ENCODE measurements at regions of chr6 and their contacts with region 1.

Region 1: GRCh38 chr6:33271458-33272274 is at the starts of genes RPS18 and VPS52:
- DNase-seq: peak; percentile 99
- H3K4me3 Mint-ChIP-seq: peak within 1 kb of the TSS; percentile 99
- H3K27ac Mint-ChIP-seq: peak within 1 kb of the TSS; percentile 100
- H3K4me1 Mint-ChIP-seq: peaks cover 34% of the 10 kb centered on the region
- H3K27me3 Mint-ChIP-seq: no peaks in the 10 kb centered on the region
- CTCF ChIP-seq: no peak
- total RNA-seq, gene RPS18: 4,063 and 4,680 TPM in 2 replicates
- total RNA-seq, gene VPS52: 47.8 and 49.7 TPM in 2 replicates

Region 2: DNA sequence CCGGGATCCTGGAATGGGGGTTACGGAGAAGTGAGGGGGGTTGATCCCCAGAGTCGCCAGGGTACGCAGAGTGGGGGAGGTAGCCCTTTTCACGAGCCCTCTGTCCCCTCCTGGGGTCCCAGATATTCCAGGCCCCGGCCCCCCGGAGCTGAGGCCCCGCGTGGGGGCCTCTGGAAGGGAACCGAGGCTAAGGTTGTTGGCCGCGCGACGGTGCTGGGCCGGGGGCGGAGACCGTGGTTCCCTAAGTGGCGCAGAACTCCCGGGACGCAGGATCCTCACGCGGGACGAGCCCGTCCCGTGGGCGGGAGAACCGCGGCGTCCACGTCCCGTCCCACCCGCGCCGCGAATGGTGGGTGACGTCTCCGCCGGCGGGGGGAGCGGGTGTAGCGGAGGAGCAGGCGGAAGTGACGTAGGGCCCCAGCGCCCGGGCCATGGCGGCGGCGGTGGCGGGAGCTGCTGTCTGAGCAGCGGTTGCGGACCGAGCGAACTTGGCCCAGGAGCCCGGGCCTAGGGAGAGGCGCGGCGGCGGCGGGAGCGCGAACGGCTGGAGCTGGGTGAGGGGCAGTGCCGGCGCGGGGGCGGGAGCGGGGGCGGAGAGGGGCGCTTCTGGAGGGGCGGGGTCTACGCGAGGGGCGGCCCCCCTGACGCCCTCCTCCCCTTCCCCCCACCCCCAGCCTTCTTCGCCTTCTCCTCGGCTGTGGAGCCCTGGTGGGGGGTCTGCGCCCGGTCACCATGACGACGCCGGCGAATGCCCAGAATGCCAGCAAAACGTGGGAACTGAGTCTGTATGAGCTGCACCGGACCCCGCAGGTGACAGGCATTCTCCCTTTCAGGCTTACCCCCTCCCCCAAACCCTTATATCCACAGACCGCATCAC is 63.3 kb before region 1 on chr6 and contains the start of gene RING1:
- CTCF ChIA-PET with region 1: no interaction called
- POLR2A ChIA-PET with region 1: interaction called, 26 read pairs
- intact Hi-C with region 1: no loop called
- DNase-seq: peak; percentile 52
- H3K4me3 Mint-ChIP-seq: peak within 1 kb of the TSS; percentile 87
- H3K27ac Mint-ChIP-seq: peak within 1 kb of the TSS; percentile 94
- H3K4me1 Mint-ChIP-seq: peaks cover 50% of the 10 kb centered on the region
- H3K27me3 Mint-ChIP-seq: peaks cover 12% of the 10 kb centered on the region
- CTCF ChIP-seq: no peak
- total RNA-seq, gene RING1: 45.4 and 48.3 TPM in 2 replicates

Region 3: DNA sequence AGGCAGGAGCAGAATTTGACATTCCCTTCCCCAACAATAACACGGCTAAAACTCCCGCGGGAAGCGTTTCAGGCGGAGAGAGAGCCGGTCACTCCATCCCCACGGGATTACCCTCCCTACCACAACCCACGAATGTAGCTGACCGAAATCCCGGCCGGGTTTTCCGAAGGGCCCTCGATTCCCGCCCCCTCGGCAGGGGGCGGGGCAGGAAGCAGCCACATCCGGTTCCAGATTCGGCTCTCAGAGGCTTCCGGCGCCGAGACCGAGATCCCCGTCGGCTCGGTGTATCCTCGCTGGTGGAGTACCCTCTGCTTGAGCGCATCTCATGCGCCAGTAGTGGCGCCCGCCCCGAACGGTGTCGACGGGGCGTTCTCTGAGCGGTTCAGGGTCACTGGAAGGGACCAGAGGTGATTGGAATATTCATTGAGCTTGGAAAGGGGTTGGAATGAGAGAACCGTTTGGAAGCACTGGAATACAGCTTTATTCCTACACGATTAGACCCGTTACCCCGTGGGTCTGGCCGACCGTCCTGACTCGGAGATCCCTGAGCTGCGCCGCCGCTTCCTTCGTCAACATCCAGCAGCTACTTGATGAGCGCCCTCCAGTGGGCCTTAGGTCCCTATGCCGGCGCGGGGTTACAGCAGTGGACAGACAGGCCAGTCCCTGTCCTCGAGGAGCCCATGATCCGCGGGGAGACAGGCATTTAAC is 27.7 kb after region 1 on chr6:
- CTCF ChIA-PET with region 1: interaction called, 4 read pairs
- POLR2A ChIA-PET with region 1: interaction called, 31 read pairs
- intact Hi-C with region 1: no loop called
- DNase-seq: peak; percentile 93
- H3K4me3 Mint-ChIP-seq: peak overlapping the region; percentile 96
- H3K27ac Mint-ChIP-seq: peak overlapping the region; percentile 100
- H3K4me1 Mint-ChIP-seq: peaks cover 28% of the 10 kb centered on the region
- H3K27me3 Mint-ChIP-seq: no peaks in the 10 kb centered on the region
- CTCF ChIP-seq: peak; percentile 64

Region 4: DNA sequence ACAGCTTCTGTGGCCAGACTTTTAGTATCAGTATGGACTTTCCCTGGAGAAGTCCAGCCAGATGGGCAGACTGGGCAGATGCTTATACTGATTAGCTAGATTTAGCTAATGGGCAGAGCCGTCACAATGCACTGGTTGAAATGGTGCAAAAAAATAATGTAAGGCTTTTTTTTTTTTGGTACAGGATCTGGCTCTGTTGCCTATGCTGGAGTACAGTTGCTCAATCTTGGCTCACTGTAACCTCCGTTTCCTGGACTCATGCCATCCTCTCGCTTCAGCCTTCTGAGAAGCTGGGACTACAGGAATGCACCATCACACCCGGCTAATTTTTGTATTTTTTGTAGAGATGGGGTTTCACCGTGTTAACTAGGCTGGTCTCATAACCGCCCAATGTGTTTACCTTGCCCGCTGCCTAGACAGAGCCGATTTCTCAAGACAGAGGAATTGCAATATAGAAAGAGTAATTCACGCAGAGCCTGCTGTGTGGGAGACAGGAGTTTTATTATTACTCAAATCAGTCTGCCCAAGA is 103.5 kb after region 1 on chr6:
- CTCF ChIA-PET with region 1: no interaction called
- POLR2A ChIA-PET with region 1: interaction called, 15 read pairs
- intact Hi-C with region 1: no loop called
- DNase-seq: peak; percentile 96
- H3K4me3 Mint-ChIP-seq: peak overlapping the region; percentile 56
- H3K27ac Mint-ChIP-seq: peak overlapping the region; percentile 71
- H3K4me1 Mint-ChIP-seq: peaks cover 16% of the 10 kb centered on the region
- H3K27me3 Mint-ChIP-seq: no peaks in the 10 kb centered on the region
- CTCF ChIP-seq: no peak

Region 5: GRCh38 chr6:33425668-33426577 is 154.3 kb after region 1 on chr6:
- CTCF ChIA-PET with region 1: no interaction called
- POLR2A ChIA-PET with region 1: interaction called, 18 read pairs
- intact Hi-C with region 1: no loop called
- DNase-seq: peak; percentile 83
- H3K4me3 Mint-ChIP-seq: peak overlapping the region; percentile 97
- H3K27ac Mint-ChIP-seq: peak overlapping the region; percentile 85
- H3K4me1 Mint-ChIP-seq: peaks cover 61% of the 10 kb centered on the region
- H3K27me3 Mint-ChIP-seq: no peaks in the 10 kb centered on the region
- CTCF ChIP-seq: peak; percentile 68